Gastrocnemius medialis (tissue), 4 donors: ENCODE measurements at regions of chr17 and their contacts with region 1.

Region 1: DNA sequence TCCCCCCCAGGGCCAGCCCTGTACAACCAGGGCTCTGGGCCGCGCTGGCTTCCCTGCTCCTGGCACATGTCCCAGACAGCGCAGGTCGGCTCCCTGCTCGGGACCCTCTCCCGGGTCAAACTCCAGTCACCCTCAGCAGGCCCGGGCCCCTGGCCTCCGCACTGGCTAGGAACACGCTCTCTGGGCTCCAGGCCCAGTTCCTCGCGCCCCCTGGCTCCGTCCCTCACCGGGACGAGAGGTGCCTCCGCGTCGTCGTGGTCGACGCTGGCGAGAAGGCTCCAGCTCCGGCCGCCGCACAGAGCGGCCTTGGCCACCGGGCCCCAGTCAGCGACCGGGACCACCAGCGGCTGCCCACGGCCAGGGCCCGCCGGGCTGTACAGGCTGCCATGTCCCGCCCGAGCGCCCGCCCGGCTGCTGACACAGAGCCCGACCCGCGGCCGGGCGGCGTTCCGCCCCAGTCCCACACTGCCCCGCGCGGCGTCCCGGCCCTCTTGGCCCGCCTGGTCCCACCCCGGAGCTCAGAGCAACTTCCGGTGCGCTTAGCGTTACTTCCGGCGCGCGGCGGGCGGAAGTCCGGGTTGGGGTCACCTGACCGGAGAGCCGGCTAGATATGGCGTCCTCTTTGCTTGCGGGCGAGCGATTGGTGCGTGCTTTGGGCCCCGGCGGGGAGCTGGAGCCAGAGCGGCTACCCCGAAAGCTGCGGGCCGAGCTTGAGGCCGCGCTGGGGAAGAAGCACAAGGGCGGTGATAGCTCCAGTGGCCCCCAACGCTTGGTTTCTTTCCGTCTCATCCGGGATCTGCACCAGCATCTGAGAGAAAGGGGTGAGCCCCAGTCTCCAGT is at the start of gene POLDIP2:
- DNase-seq: peak; percentile 92 to 94
- ATAC-seq: peak; percentile 98
- H3K4me3 ChIP-seq: peak within 1 kb of the TSS; percentile 88 to 98 (median 94)
- H3K27ac ChIP-seq: peak within 1 kb of the TSS; percentile 94 to 97 (median 96)
- H3K4me1 ChIP-seq: peaks cover 24 to 26% of the 10 kb centered on the region in 2 donors
- H3K27me3 ChIP-seq: no peaks in the 10 kb centered on the region
- CTCF ChIP-seq: no peak
- POLR2A ChIP-seq: peak; percentile 93 to 97
- total RNA-seq, gene POLDIP2: 217 to 281 (median 237) TPM

Region 2: GRCh38 chr17:28318759-28319660 is 38.3 kb before region 1 on chr17 and contains the start of gene TMEM97:
- in situ Hi-C with region 1: no loop called
- intact Hi-C with region 1: loop called (anchors 1 kb)
- DNase-seq: peak; percentile 97
- ATAC-seq: peak; percentile 97 to 99
- H3K4me3 ChIP-seq: peak within 1 kb of the TSS; percentile 64 to 88 (median 71)
- H3K27ac ChIP-seq: peak within 1 kb of the TSS; percentile 79 to 91 (median 85)
- H3K4me1 ChIP-seq: peaks cover 16 to 19% of the 10 kb centered on the region in 2 donors
- H3K27me3 ChIP-seq: no peaks in the 10 kb centered on the region
- CTCF ChIP-seq: peak in 4 of 5 experiments; percentile 8 to 24 (median 16)
- POLR2A ChIP-seq: peak; percentile 58 to 59
- total RNA-seq, gene TMEM97: 5.1 to 7.2 (median 6.6) TPM

Region 3: DNA sequence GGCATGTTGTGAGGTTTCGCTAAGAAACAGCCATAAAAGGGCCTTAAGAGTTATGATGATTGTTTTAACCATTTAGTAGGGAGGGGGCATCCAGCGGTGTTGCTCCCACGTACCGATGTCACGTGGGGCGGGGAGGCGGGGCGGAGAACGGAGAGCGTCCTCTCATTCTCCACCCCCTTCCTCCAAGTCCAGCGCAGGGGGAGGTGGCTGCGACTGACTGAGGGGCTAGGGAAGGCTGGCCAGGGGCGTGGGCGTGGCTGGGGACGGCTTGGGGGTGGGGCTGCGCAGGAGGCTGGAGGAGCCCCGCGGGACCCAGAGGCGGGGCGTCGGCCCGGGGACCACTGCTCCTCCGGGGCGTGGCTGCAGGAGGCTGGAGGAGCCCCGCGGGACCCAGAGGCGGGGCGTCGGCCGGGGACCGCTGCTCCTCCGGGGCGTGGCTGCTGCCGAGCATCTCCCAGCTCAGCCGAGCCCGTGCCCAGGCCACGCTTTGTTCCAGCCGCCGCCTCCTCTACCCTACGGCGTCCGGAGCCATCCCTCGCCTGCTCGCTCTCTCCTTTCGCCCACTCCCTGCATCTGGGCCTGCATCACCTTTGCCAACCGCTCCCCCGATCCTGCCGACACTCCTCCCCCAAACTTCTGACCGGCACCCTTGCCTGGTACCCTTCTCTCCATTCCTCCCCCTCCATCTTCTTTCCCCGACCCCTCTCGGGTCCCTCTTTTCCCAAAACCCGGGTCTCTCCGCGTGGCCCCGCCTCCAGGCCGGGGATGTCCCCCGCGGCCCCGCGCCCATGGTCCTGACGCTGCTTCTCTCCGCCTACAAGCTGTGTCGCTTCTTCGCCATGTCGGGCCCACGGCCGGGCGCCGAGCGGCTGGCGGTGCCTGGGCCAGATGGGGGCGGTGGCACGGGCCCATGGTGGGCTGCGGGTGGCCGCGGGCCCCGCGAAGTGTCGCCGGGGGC is 14.2 kb after region 1 on chr17 and contains the start of gene SARM1:
- in situ Hi-C with region 1: no loop called
- intact Hi-C with region 1: loop called (anchors 2 kb)
- DNase-seq: peak; percentile 46 to 54
- ATAC-seq: peak; percentile 64 to 67
- H3K4me3 ChIP-seq: peak within 1 kb of the TSS; percentile 58 to 77 (median 64)
- H3K27ac ChIP-seq: peak within 1 kb of the TSS; percentile 32 to 50 (median 37)
- H3K4me1 ChIP-seq: peaks cover 10 to 11% of the 10 kb centered on the region in 2 donors
- H3K27me3 ChIP-seq: no peaks in the 10 kb centered on the region
- CTCF ChIP-seq: no peak
- POLR2A ChIP-seq: no peak
- total RNA-seq, gene SARM1: 0.78 to 1.9 (median 1.7) TPM

Region 4: GRCh38 chr17:28951991-28952975 is 595.0 kb after region 1 on chr17:
- in situ Hi-C with region 1: loop called in 1 of 4 experiments (anchors 25 kb)
- intact Hi-C with region 1: loop called (anchors 5 kb)
- DNase-seq: peak; percentile 98 to 99
- ATAC-seq: peak; percentile 80 to 85
- H3K4me3 ChIP-seq: peak overlapping the region; percentile 49 to 88 (median 68)
- H3K27ac ChIP-seq: peak overlapping the region; percentile 93 to 96 (median 95)
- H3K4me1 ChIP-seq: peaks cover 22 to 25% of the 10 kb centered on the region in 2 donors
- H3K27me3 ChIP-seq: no peaks in the 10 kb centered on the region
- CTCF ChIP-seq: no peak
- POLR2A ChIP-seq: peak; percentile 55 to 84